A549 (cell line): ENCODE measurements at regions of chr11 and their contacts with region 1.

Region 1: GRCh38 chr11:3807909-3808860 is at the start of gene PGAP2:
- DNase-seq: peak; percentile 73 to 93
- ATAC-seq: peak; percentile 84 to 89
- H3K4me3 ChIP-seq: peak within 1 kb of the TSS; percentile 79
- H3K27ac ChIP-seq: peak within 1 kb of the TSS; percentile 80 to 90
- H3K4me1 ChIP-seq: 0 out of 3 replicates have a peak, but pooled peaks cover 8% of the 10 kb centered on the region
- CTCF ChIP-seq: peak; percentile 61
- EP300 ChIP-seq: no peak
- POLR2A ChIP-seq: 0 out of 2 replicates have a peak, but pooled peaks have one; percentile 16
- RAD21 ChIP-seq: peak; percentile 54 to 57; a peak in 3 of 5 replicates
- polyA plus RNA-seq, gene PGAP2: 35.2 and 49.2 TPM in 2 replicates

Region 2: GRCh38 chr11:3378426-3379423 is 429.5 kb before region 1 on chr11 and contains the start of gene ZNF195:
- CTCF ChIA-PET with region 1: no interaction called
- POLR2A ChIA-PET with region 1: no interaction called
- DNase-seq: peak; percentile 99
- ATAC-seq: peak; percentile 100
- H3K4me3 ChIP-seq: peak within 1 kb of the TSS; percentile 94
- H3K27ac ChIP-seq: peak within 1 kb of the TSS; percentile 89 to 99
- H3K4me1 ChIP-seq: no peaks in the 10 kb centered on the region
- CTCF ChIP-seq: no peak
- EP300 ChIP-seq: no peak
- POLR2A ChIP-seq: peak; percentile 90
- RAD21 ChIP-seq: no peak
- polyA plus RNA-seq, gene ZNF195: 30.1 and 30.9 TPM in 2 replicates

Region 3: GRCh38 chr11:3753110-3753509 is 55.1 kb before region 1 on chr11:
- CTCF ChIA-PET with region 1: interaction called, 13 read pairs
- POLR2A ChIA-PET with region 1: no interaction called
- DNase-seq: no peak
- ATAC-seq: no peak
- H3K4me3 ChIP-seq: no peak overlapping the region
- H3K27ac ChIP-seq: no peak overlapping the region
- H3K4me1 ChIP-seq: peaks cover 3% of the 10 kb centered on the region; the same call in 1 of the 3 replicates
- CTCF ChIP-seq: no peak
- EP300 ChIP-seq: no peak
- POLR2A ChIP-seq: no peak
- RAD21 ChIP-seq: no peak

Region 4: DNA sequence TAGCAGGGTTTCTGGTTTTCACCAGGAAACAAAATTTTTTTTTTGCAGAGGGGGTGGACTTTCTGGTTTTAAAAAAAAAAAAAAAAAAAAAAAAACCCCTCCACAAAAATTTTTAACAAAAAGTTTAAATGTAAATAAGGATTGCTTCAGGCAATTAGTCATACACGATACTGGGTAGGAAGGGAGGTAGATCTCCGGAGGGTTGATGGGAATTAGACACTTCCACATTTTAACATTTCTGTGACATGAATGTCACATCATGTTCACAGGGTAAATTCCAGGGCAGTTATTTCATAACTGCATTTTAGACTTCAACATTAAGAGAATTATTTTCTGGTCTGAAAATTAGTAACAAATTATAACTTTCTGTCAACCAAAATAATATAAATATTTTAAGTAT is 26.8 kb before region 1 on chr11:
- CTCF ChIA-PET with region 1: interaction called, 16 read pairs
- POLR2A ChIA-PET with region 1: no interaction called
- DNase-seq: no peak
- ATAC-seq: no peak; a peak in 1 of 6 replicates
- H3K4me3 ChIP-seq: no peak overlapping the region
- H3K27ac ChIP-seq: no peak overlapping the region
- H3K4me1 ChIP-seq: peaks cover 17% of the 10 kb centered on the region
- CTCF ChIP-seq: no peak
- EP300 ChIP-seq: no peak
- POLR2A ChIP-seq: no peak
- RAD21 ChIP-seq: no peak

Region 5: DNA sequence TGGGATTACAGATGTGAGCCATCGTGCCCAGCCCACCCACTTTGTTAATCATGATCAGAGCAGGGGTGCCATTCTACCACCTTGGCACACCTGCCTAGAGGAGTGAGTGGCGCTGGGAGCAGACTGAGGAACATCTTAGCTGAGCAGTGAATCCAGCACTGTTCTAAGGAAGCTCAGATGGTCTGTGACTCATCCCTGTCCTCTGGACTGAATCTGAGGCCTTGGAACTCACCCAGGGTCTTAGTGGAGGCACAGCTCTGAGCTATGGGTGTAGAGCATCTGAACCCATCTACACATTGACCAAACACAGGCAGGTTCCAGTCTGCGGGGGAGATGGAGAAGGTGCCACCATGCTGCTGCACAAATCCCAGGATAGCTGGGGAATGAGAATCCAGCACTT is 15.1 kb after region 1 on chr11:
- CTCF ChIA-PET with region 1: interaction called, 66 read pairs
- POLR2A ChIA-PET with region 1: interaction called, 4 read pairs
- DNase-seq: peak in 1 of 2 experiments; percentile 29
- ATAC-seq: peak; percentile 40 to 43; a peak in 4 of 6 replicates
- H3K4me3 ChIP-seq: no peak overlapping the region
- H3K27ac ChIP-seq: no peak overlapping the region
- H3K4me1 ChIP-seq: peaks cover 6% of the 10 kb centered on the region; the same call in 1 of the 3 replicates
- CTCF ChIP-seq: no peak
- EP300 ChIP-seq: no peak
- POLR2A ChIP-seq: no peak
- RAD21 ChIP-seq: no peak

Region 6: DNA sequence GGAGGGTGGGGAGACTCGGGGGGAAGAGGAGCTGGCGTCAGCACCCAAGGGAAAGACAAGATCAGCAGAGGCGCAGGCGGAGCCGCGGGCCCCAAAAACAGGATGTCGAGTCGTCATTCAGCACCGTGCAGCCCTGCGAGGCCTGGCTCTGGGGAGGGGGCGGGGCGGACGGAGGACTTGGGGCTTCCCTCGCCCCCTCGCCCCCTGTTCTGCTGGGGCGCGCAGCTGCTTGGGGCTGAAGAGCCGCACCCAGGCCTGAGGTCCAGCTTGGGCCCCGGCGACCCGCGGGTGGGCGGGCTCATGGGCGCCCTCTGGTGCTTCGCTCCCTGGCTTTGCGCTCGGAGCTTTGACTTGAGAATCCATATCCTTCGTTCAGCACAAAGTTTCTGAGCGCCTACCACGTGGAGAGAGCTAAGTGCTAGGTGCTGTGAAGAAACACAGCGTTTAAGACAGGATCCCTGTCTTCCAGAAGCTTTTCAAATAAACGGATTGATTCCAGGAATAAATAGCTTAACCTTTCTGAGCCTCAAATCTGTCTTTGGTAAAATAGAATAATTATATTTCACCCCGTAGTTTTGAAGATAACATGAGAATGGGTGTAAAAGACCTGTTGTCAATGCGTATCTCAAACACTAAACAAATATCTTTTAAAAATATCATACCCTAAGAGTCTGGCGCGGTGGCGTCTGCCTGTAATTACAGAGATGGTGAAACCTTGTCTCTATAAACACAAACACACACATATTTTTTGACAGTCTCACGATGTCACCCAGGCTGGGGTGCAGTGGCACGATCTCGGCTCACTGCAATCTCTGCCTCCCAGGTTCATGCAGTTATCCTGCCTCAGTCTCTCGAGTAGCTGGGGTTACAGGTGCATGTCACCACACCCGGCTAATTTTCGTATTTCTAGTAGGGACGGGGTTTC is 33.5 kb after region 1 on chr11:
- CTCF ChIA-PET with region 1: interaction called, 18 read pairs
- POLR2A ChIA-PET with region 1: interaction called, 11 read pairs
- DNase-seq: peak; percentile 80 to 93
- ATAC-seq: peak; percentile 70 to 86
- H3K4me3 ChIP-seq: peak overlapping the region; percentile 84
- H3K27ac ChIP-seq: peak overlapping the region; percentile 95 to 98
- H3K4me1 ChIP-seq: peaks cover 35% of the 10 kb centered on the region
- CTCF ChIP-seq: peak; percentile 88
- EP300 ChIP-seq: no peak
- POLR2A ChIP-seq: peak; percentile 42
- RAD21 ChIP-seq: peak; percentile 39 to 47

Region 7: DNA sequence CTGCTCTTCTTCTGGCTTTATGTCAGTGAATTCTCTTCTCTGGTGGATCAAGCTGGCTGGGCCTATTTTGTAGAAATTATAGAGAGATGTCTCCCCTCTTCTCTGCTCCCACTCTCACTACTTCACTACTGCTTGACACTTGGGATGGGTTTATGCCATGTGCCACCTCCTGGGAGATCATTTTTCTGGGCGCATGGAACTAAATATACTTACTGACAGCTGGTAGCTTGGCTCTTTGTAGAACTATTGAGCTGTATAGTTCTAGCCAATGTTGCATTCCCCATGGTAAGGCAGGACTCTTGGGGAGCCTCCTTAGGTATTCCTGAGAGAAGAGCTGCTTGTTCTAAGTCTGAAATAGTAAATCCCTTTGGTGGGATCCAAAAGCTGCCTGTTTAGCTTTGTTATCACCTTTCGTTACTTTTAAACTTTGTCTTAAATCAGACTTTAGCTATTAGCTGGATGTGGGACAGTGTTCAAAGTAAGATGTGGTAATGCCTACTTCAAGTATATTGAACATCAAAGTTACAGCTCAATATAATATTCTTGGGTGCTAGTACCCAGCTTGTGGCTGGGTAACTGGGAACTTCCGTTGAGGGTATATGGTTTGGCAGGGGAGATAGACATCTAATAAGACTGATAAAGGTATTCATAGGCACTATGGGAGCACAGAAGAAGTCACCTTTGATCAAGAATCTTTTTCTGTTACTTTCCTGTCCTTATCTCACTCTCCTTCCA is 198.9 kb after region 1 on chr11:
- CTCF ChIA-PET with region 1: no interaction called
- POLR2A ChIA-PET with region 1: no interaction called
- DNase-seq: no peak
- ATAC-seq: no peak
- H3K4me3 ChIP-seq: no peak overlapping the region
- H3K27ac ChIP-seq: no peak overlapping the region
- H3K4me1 ChIP-seq: no peaks in the 10 kb centered on the region
- CTCF ChIP-seq: no peak
- EP300 ChIP-seq: no peak
- POLR2A ChIP-seq: no peak
- RAD21 ChIP-seq: no peak